ENCODE measurements at regions of chr1 and their contacts with region 1.

Region 1: GRCh38 chr1:156445789-156446263 is 54.7 kb downstream of the MEF2D start:
- DNase-seq: peak; percentile 69 to 75 (median 74)
- H3K4me3 ChIP-seq: no peak overlapping the region
- H3K27ac ChIP-seq: no peak overlapping the region
- H3K4me1 ChIP-seq: peaks cover 0 to 2% (median 0%) of the 10 kb centered on the region in 4 experiments
- H3K27me3 ChIP-seq: peaks cover 24 to 44% (median 33%) of the 10 kb centered on the region in 5 experiments

Region 2: GRCh38 chr1:156245451-156246232 is 200.2 kb before region 1 on chr1:
- CTCF ChIA-PET with region 1: no interaction called
- POLR2A ChIA-PET with region 1: no interaction called
- DNase-seq: peak; percentile 18 to 68 (median 59)
- H3K4me3 ChIP-seq: peak overlapping the region in 5 of 7 experiments; percentile 14 to 55 (median 50)
- H3K27ac ChIP-seq: no peak overlapping the region
- H3K4me1 ChIP-seq: peaks cover 0 to 58% (median 51%) of the 10 kb centered on the region in 4 experiments
- H3K27me3 ChIP-seq: peaks cover 0 to 2% (median 0%) of the 10 kb centered on the region in 5 experiments

Region 3: DNA sequence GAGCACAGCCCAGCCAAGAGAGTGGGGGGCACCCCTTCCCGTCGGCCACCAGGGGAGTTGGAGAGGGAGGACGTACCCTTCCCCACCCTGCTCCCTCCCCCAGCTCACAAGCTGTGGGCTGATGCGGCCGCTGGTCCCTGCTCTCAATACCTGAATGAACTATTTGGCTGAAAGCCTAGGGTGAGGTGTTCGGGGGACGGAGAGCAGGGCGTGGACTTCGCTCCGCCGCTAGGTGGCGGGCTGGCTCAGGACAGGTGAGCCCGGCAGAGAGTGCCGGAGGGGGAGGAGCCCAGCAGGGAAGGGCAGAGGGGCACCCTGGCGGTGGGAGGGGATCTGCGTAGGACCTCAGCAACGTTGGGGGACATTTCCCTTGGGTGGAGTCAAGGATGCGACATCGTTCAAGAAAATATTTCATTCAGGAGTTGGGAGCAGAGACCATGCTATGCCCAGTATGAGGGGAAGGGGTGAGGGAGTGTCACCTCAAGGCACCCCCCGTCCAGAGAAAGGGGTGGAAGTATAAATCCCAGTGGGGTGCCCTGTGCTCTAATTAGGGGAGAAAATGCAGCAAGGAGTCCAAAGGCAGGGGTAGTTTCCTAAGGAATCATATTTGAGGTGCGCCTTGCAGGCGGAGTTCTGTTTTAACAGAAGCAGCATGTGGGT is 88.8 kb before region 1 on chr1:
- CTCF ChIA-PET with region 1: interaction called, 11 read pairs
- POLR2A ChIA-PET with region 1: no interaction called
- DNase-seq: peak; percentile 68 to 73 (median 70)
- H3K4me3 ChIP-seq: peak overlapping the region in 2 of 7 experiments; percentile 11 to 45
- H3K27ac ChIP-seq: no peak overlapping the region
- H3K4me1 ChIP-seq: peaks cover 0 to 7% (median 5%) of the 10 kb centered on the region in 4 experiments
- H3K27me3 ChIP-seq: peaks cover 0 to 11% (median 4%) of the 10 kb centered on the region in 5 experiments

Region 4: GRCh38 chr1:156383023-156383422 is 62.8 kb before region 1 on chr1:
- CTCF ChIA-PET with region 1: interaction called, 166 read pairs
- POLR2A ChIA-PET with region 1: interaction called, 7 read pairs
- DNase-seq: peak; percentile 62 to 76 (median 69)
- H3K4me3 ChIP-seq: no peak overlapping the region
- H3K27ac ChIP-seq: no peak overlapping the region
- H3K4me1 ChIP-seq: peaks cover 3 to 21% (median 17%) of the 10 kb centered on the region in 4 experiments
- H3K27me3 ChIP-seq: peaks cover 0 to 20% (median 10%) of the 10 kb centered on the region in 5 experiments

Region 5: DNA sequence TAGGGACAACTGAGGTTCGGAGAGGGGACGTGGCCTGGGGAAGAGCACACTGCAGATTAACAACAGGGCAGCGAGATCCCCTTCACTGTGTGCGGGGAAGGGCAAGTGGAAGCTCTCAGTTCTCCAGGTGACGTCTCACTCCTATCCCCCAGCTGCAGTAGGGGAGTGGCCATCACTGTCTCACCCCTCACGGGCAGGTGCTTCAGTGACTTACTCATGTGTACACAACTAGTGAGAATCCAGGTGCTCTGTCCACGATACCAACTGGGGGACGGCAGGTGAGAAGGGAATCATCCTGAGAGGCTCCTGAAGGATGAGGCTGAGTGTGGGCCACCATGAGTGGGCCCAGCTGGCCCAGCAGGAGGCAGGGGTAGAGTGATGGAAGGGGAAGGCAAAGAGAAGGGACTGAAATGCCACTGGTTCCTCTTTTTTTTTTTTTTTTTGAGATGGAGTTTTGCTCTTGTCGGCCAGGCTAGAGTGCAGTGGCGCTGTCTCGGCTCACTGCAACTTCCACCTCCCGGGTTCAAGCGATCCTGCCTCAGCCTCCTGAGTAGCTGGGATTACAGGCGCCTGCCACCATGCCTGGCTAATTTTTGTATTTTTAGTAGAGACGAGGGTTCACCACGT is 50.9 kb before region 1 on chr1:
- CTCF ChIA-PET with region 1: interaction called, 98 read pairs
- POLR2A ChIA-PET with region 1: interaction called, 4 read pairs
- DNase-seq: peak; percentile 22 to 57 (median 55)
- H3K4me3 ChIP-seq: no peak overlapping the region
- H3K27ac ChIP-seq: no peak overlapping the region
- H3K4me1 ChIP-seq: peaks cover 0 to 6% (median 0%) of the 10 kb centered on the region in 4 experiments
- H3K27me3 ChIP-seq: peaks cover 0 to 21% (median 0%) of the 10 kb centered on the region in 5 experiments

Region 6: DNA sequence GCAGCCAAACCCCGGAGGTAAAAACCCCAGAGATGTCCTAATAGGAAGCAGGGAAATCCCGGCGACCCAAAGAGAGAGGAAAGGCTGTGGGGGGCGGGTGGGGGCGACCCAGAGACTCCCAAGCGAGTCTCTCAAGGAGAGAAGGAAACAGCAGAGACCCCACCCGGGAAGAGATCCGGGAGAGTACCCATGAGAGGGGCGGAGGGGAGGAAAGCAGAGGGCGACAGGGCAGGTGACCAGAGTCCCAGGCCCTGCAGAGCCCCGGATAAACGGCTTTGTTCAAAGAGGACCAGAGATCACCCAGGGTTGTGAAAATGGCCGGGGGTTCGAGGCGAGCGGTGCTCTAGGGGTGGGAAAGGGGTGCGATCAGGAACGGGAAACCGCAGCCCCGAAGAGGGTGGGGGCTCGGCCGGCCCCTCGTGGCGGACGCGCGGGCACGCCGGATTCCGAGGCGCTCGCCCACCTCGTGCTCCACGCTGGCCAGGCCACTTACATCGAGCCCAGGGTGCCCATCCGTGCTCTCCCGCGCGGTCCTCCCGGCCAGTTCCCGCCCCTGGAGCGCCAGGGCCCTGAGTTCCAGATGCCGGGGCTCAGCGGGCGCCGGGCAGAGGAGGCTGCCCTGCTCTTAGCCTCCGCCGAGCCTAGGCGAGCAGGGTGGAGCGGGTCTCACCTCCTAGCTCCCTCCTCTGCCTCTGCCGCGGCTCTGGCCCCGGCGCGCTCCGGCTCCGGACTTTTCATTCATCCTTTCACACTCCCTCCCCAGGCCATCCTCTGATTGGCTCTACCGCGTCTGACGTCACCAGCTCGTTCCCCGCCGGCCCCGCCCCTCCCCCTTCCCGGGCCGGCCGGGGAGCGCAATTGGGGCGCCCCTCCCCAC is 24.5 kb before region 1 on chr1:
- CTCF ChIA-PET with region 1: interaction called, 12 read pairs
- POLR2A ChIA-PET with region 1: no interaction called
- DNase-seq: peak; percentile 57 to 78 (median 76)
- H3K4me3 ChIP-seq: peak overlapping the region in 4 of 7 experiments; percentile 17 to 46 (median 30)
- H3K27ac ChIP-seq: no peak overlapping the region
- H3K4me1 ChIP-seq: peaks cover 0 to 23% (median 18%) of the 10 kb centered on the region in 4 experiments
- H3K27me3 ChIP-seq: peaks cover 34 to 98% (median 55%) of the 10 kb centered on the region in 5 experiments

Region 7: GRCh38 chr1:156435545-156436141 is 10.2 kb before region 1 on chr1:
- CTCF ChIA-PET with region 1: interaction called, 38 read pairs
- POLR2A ChIA-PET with region 1: no interaction called
- DNase-seq: peak in 2 of 3 donors; percentile 41 to 50
- H3K4me3 ChIP-seq: peak overlapping the region in 4 of 7 experiments; percentile 25 to 50 (median 40)
- H3K27ac ChIP-seq: no peak overlapping the region
- H3K4me1 ChIP-seq: peaks cover 0 to 23% (median 14%) of the 10 kb centered on the region in 4 experiments
- H3K27me3 ChIP-seq: peaks cover 36 to 100% (median 71%) of the 10 kb centered on the region in 5 experiments

Region 8: GRCh38 chr1:156464825-156465452 is 19.1 kb after region 1 on chr1:
- CTCF ChIA-PET with region 1: no interaction called
- POLR2A ChIA-PET with region 1: no interaction called
- DNase-seq: no peak
- H3K4me3 ChIP-seq: no peak overlapping the region
- H3K27ac ChIP-seq: no peak overlapping the region
- H3K4me1 ChIP-seq: no peaks in the 10 kb centered on the region
- H3K27me3 ChIP-seq: no peaks in the 10 kb centered on the region

Region 9: GRCh38 chr1:156508163-156508887 is 62.5 kb after region 1 on chr1:
- CTCF ChIA-PET with region 1: no interaction called
- POLR2A ChIA-PET with region 1: no interaction called
- DNase-seq: no peak
- H3K4me3 ChIP-seq: no peak overlapping the region
- H3K27ac ChIP-seq: peak overlapping the region in 1 of 2 experiments; percentile 27
- H3K4me1 ChIP-seq: peaks cover 13 to 52% (median 40%) of the 10 kb centered on the region in 4 experiments
- H3K27me3 ChIP-seq: no peaks in the 10 kb centered on the region

Region 10: DNA sequence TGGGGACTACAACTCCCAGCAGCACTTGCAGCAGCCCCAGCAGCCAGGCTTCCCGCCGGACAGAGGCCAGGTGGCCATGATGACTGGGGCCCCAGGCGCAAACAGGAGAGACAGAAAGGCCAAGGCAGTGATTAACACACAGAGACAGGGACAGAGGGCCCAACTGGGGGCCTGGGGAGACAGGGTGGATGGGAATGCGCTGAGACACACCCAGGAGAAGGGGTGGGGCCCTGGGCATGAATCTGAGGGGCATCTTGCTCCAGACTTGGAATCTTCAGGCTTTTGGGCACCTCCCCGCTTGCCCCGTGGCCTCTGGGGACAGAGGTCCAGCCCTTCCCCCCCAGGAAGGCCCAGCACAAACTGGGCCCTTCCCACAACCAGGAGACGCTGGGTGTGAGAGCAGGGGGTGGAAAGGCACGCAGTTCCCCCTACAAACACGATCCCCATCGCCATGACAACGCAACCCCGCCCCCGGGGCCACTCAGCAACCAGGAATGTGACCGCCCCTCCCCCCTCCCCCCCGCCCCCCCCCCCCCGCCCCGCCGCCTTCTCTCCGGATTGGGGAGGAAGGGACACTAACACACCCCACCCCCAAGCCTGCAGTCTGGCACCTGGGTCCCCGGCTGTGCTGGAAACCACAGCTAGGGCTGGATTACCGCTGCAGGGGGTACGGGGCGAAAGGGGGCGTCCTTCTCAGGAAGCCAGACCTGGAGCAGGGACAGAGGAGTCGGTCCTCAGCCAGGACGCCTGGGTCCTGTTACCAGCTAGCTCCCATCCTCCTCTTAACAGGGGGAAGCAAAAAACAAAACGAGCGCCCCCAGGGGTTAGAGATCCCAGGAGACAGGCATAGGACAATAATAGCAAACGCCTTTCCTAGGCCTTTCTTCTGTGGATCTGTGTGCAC is 301.2 kb after region 1 on chr1:
- CTCF ChIA-PET with region 1: no interaction called
- POLR2A ChIA-PET with region 1: no interaction called
- DNase-seq: peak; percentile 62 to 83 (median 83)
- H3K4me3 ChIP-seq: peak overlapping the region; percentile 34 to 100 (median 90)
- H3K27ac ChIP-seq: peak overlapping the region; percentile 88 to 95
- H3K4me1 ChIP-seq: peaks cover 30 to 74% (median 69%) of the 10 kb centered on the region in 4 experiments
- H3K27me3 ChIP-seq: no peaks in the 10 kb centered on the region